AG04450 (cell line): ENCODE measurements at regions of chr19 and their contacts with region 1.

Region 1: DNA sequence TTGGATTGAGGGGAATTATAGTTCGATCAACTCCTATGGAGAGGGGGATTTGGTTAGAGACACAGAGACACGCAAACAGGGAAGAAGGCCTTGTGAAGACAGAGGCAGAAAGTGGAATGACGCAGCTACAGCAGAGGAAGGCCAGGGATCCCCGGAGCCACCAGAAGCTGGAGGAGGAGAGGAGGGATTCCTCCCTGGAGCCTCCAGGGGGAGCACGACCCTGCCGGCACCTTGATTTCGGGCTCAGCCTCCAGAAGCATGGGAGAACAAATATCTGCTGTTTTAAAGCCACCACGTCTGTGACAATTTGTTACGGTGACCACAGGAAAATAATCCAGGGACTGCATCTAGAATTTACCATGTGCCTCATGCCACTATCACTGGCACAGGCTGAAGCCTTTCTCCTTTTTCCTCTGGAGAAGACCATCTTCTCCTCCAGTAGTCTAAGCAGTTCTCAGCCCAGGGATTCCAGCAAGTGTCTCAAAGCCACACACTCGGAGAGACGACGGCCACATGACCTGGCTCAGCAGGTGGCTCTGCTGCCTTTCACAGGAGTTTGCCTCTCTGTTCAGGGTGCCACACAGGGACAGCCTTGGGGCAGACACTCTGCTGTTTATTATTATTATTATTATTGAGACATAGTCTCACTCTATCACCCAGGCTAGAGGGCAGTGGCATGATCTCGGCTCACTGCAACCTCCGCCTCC is 39.9 kb upstream of the CCNE1 start:
- DNase-seq: peak; percentile 4
- H3K4me3 ChIP-seq: no peak overlapping the region
- H3K27ac ChIP-seq: no peak overlapping the region
- H3K27me3 ChIP-seq: no peaks in the 10 kb centered on the region
- CTCF ChIP-seq: peak; percentile 84

Region 2: DNA sequence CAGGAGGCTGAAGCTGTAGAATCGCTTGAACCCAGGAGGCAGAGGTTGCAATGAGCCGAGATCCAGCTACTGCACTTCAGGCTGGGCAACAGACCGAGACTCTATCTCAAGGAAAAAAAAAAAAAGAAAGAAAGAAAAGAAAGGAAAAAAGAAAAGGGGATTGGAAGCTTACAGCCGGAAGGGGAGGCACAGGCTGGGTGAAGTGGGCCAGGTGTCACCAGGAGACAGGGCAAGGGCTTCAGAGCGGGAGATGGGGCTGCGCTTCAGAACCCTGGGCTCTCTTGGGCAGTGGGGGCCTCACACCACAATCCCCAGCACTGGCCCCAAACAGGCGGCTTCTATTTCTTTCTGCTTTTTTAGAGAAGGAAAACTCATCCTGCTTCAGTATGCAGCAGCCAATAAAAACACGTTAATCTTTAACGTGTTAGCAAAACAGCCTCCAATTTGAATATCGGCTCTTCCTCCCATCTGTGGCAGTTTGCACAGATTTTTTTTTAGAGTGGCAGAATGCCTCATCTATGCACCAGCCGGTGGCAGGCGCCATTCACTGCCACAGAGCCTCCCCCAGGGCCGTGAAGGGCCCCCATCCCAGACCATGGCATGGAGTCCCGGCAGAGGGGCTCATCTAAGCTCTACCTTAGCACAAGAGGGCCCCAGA is 10.2 kb before region 1 on chr19:
- CTCF ChIA-PET with region 1: interaction called, 13 read pairs
- POLR2A ChIA-PET with region 1: no interaction called
- DNase-seq: no peak
- H3K4me3 ChIP-seq: no peak overlapping the region
- H3K27ac ChIP-seq: no peak overlapping the region
- H3K27me3 ChIP-seq: peaks cover 4% of the 10 kb centered on the region
- CTCF ChIP-seq: no peak

Region 3: DNA sequence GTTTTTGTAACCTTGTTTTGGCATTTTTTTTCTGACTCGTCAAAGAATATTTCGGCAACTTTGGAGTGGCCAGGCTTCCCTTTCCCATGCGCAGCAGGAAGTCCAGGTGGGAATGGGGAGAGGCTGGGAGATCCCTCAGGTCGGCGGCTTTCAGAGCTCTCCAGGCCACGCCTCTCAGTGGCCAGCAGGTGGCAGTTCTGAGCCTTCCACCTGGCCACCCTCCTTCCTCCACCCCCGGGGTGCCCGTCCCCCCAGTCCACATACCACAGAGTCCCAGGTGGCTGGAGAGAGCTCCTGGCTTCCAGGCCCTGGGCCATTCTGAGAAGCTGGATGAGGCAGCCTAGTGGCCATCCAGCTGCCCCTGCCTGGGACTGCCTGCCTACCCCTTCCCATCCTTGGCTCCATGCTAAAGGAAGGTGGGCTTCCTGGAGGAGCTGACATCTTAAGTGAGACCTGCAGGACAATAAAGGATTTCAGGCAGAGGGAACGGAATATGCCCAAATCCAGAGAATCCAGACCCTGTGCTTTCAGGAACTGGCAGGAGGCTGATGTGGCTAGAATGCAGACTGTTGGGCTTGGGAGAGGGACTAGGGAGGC is 86.2 kb after region 1 on chr19:
- CTCF ChIA-PET with region 1: no interaction called
- POLR2A ChIA-PET with region 1: no interaction called
- DNase-seq: no peak
- H3K4me3 ChIP-seq: no peak overlapping the region
- H3K27ac ChIP-seq: no peak overlapping the region
- H3K27me3 ChIP-seq: peaks cover 3% of the 10 kb centered on the region
- CTCF ChIP-seq: peak; percentile 55